Activated CD4-positive, alpha-beta T cell treated with anti-CD3 and anti-CD28 coated beads for 36 hours (primary cell): ENCODE measurements at regions of chr10 and their contacts with region 1.

Region 1: DNA sequence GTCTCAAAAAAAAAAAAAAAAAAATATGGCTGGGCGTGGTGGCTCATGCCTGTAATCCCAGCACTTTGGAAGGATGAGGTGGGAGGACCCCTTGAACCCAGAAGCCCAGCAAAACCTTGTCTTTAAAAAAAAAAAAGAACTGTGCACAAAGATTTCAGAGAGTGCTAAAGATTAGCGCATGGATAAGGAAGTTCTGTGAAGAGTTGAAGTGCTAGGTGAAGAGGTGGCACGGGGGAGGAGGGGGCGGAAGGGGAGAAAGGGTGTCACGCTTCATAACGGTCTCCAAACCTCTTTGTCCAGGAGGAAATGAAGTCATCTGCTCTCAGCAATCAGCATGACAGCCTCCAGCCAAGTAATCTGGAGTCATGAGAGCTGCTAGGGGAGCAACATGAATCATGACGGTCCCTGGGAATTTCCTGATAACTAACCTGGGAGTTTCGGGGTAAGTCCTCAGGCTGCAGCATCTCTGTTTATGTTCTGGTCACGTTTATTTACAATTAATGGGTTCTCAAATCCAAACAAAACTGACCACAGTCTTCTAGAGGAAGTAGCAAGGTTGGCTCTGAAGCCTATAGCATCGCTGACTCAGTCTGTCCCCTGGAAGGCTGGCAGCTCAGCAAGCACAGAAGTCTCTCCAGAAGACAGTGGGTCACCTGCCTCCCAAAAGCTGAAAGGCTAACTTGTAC is 1.9 kb upstream of the PLAU start:
- DNase-seq: peak; percentile 72
- ATAC-seq: peak; percentile 76
- H3K4me3 Mint-ChIP-seq: peak overlapping the region; percentile 44
- H3K27ac Mint-ChIP-seq: peak overlapping the region; percentile 6
- H3K4me1 Mint-ChIP-seq: peaks cover 36% of the 10 kb centered on the region
- H3K27me3 Mint-ChIP-seq: peaks cover 46% of the 10 kb centered on the region

Region 2: DNA sequence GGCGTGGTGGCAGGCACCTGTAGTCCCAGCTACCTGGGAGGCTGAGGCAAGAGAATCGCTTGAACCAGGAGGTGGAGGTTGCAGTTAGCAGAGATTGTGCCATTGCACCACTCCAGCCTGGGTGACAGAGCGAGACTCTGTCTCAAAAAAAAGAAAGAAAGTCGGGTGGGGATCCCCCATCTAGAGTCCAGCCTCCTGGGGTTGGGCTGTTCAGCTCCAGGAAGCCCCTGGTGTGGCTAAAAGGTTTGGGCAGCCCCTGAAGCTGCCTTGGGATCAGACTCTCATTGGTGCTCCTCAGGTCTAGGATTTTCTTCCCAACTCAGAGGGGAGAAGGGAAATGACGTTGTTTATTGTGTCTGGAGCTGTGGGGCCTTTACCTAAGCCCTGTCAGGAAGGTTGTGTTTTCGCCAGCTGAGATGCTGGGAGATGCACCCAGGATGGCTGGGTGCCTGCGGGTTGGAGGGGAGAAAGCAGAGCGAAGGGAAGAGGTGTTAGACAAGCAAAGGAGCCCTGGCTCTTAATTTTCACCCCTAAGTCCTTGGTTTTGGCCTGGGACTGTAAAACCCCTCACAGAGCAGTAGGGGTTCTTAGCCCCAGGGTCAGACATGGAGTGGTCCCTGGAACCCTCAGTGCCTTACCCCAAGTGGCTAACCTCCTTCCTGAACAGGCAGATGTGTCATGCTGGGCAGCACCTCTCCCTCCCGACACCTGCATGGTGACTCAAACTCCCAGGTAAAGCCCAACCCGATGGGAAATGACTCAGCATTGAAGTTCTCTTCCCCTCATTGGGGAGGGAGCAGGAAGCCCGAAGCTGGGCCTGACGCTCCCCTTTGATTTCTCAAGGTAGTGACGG is 23.0 kb after region 1 on chr10:
- CTCF ChIA-PET with region 1: no interaction called
- POLR2A ChIA-PET with region 1: no interaction called
- intact Hi-C with region 1: loop called in 1 of 2 experiments (anchors 2 kb)
- DNase-seq: peak; percentile 79
- ATAC-seq: peak; percentile 98
- H3K4me3 Mint-ChIP-seq: peak overlapping the region; percentile 9
- H3K27ac Mint-ChIP-seq: peak overlapping the region; percentile 63
- H3K4me1 Mint-ChIP-seq: peaks cover 15% of the 10 kb centered on the region
- H3K27me3 Mint-ChIP-seq: peaks cover 4% of the 10 kb centered on the region